B cell (primary cell): ENCODE measurements at regions of chr1 and their contacts with region 1.

Region 1: DNA sequence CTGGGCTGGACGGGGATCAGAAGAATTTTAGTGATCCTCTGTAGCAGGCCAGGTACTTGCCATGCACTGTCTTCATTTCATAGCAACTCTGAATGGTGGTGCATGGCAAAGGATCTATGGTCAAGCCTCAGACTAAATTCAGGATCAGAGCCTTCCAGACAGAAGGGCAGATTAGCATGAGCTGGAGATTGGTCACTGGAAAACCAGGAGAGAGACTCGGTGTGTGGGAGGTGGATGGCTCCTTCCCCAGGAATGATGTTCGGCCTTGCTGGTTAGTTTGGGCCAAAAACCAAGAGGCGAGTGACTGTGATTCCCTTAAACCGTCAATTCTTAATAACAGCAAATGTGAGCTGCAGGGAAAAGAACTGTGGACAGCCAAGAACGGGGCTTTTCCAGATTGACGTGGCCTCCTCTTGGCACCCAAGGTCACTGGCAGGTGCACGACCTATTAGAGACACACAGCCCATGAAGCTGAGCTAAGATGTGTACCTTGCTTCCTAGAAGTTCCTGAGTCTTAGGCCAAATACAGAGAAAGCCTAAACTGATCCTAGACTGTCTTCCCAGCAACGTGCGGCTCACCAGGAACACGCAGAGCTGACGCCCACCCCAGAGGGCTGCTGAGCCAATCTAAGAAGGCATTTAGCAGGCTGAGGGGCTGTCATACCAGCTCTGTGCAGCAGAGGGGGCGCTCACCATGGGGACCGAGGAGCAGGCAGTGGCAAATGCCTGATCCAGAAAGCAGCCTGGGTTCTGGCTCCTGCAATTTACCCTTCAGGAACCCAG is 18.5 kb downstream of the ALDH4A1 start:
- DNase-seq: peak; percentile 76
- ATAC-seq: peak; percentile 79
- H3K4me3 ChIP-seq: no peak overlapping the region
- H3K4me3 Mint-ChIP-seq: no peak overlapping the region
- H3K27ac ChIP-seq: no peak overlapping the region
- H3K27ac Mint-ChIP-seq: no peak overlapping the region
- H3K4me1 ChIP-seq: no peaks in the 10 kb centered on the region
- H3K4me1 Mint-ChIP-seq: no peaks in the 10 kb centered on the region
- H3K27me3 ChIP-seq: no peaks in the 10 kb centered on the region
- H3K27me3 Mint-ChIP-seq: no peaks in the 10 kb centered on the region
- CTCF ChIP-seq: peak; percentile 96

Region 2: DNA sequence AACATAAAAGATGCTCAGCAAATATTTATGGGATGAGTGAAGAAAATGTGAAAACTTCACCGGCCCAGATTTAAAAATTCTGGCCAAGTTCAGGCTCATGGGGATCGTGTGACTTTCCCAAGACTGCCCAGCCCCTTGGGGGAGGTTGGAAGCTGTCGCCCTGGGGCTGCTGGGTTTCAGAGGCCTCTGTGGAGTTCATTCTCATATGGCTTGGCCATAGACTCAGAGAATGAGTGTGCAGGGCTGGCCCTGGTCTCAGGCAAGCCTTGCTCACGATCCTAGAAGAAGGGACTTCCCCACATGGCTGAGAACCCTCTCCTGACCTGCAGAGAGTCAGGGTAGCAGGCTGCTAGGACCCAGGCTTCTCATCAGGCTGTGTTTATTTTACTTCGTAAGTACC is 1789.2 kb before region 1 on chr1:
- CTCF ChIA-PET with region 1: no interaction called
- POLR2A ChIA-PET with region 1: no interaction called
- intact Hi-C with region 1: no loop called
- DNase-seq: no peak
- ATAC-seq: no peak
- H3K4me3 ChIP-seq: no peak overlapping the region
- H3K4me3 Mint-ChIP-seq: no peak overlapping the region
- H3K27ac ChIP-seq: no peak overlapping the region
- H3K27ac Mint-ChIP-seq: no peak overlapping the region
- H3K4me1 ChIP-seq: no peaks in the 10 kb centered on the region
- H3K4me1 Mint-ChIP-seq: no peaks in the 10 kb centered on the region
- H3K27me3 ChIP-seq: no peaks in the 10 kb centered on the region
- H3K27me3 Mint-ChIP-seq: peaks cover 3% of the 10 kb centered on the region
- CTCF ChIP-seq: no peak

Region 3: GRCh38 chr1:18805925-18806849 is 77.6 kb before region 1 on chr1:
- CTCF ChIA-PET with region 1: no interaction called
- POLR2A ChIA-PET with region 1: no interaction called
- intact Hi-C with region 1: no loop called
- DNase-seq: no peak
- ATAC-seq: no peak
- H3K4me3 ChIP-seq: no peak overlapping the region
- H3K4me3 Mint-ChIP-seq: no peak overlapping the region
- H3K27ac ChIP-seq: no peak overlapping the region
- H3K27ac Mint-ChIP-seq: no peak overlapping the region
- H3K4me1 ChIP-seq: no peaks in the 10 kb centered on the region
- H3K4me1 Mint-ChIP-seq: no peaks in the 10 kb centered on the region
- H3K27me3 ChIP-seq: peaks cover 0 to 5% (median 0%) of the 10 kb centered on the region in 4 experiments
- H3K27me3 Mint-ChIP-seq: peaks cover 23% of the 10 kb centered on the region
- CTCF ChIP-seq: no peak

Region 4: DNA sequence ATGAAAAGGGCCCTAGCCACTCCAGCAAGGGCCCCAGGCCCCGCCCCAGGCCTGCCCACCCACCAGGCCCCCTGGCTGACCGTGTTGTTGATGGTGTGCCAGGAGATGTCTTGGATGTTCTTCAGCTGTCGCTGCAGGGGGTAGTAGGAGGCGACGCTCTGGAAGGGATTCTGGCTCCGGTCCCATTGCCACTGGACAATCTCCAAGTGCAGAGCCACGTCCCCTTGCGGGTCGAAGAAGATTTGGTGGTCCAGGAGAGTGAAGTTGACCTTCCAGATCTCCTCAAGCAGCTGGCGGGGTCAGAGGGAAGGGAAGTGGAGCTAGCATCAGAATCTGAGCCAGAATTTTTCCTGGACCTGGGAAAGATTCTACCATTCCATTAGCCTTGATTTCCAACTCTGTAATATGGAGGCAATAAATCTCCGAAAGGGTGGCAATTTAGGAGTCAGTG is 34.5 kb before region 1 on chr1:
- CTCF ChIA-PET with region 1: no interaction called
- POLR2A ChIA-PET with region 1: no interaction called
- intact Hi-C with region 1: no loop called
- DNase-seq: no peak
- ATAC-seq: no peak
- H3K4me3 ChIP-seq: no peak overlapping the region
- H3K4me3 Mint-ChIP-seq: no peak overlapping the region
- H3K27ac ChIP-seq: no peak overlapping the region
- H3K27ac Mint-ChIP-seq: no peak overlapping the region
- H3K4me1 ChIP-seq: no peaks in the 10 kb centered on the region
- H3K4me1 Mint-ChIP-seq: no peaks in the 10 kb centered on the region
- H3K27me3 ChIP-seq: peaks cover 0 to 3% (median 0%) of the 10 kb centered on the region in 4 experiments
- H3K27me3 Mint-ChIP-seq: peaks cover 5% of the 10 kb centered on the region
- CTCF ChIP-seq: no peak

Region 5: DNA sequence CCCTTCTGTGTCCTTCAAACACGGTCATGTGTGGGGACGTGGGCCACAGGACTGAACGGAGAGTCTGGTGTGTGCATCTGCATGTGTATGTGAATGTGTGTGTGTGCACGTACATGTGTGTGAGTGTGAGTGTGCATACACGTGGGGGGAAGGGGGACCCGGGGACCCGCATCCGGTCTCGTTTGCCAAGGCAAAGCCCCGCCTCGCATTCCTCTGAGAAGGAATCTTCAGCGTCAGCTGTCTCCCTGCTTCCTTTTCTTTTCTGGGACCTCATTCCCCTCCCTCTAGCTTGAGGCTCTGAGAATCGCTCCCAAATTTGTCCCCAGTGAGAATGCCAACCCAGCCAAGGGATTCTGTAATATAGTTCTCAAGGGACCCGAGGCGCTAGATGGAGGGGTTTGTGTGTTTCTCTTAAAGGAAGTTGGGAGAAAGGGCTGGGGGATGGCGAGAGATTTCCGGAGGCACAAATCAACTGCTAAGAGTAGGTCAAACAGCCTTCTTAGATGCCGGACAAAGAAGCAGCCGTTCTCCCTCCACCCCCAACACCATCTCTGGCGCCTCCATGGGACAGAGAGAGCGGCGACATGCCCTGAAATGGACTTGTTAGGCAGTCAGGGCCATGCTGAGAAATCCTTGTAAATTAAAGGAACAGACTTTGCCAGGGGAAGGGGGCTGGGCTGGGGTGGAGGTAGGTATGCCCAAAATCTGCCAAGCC is 66.0 kb after region 1 on chr1:
- CTCF ChIA-PET with region 1: interaction called, 11 read pairs
- POLR2A ChIA-PET with region 1: no interaction called
- intact Hi-C with region 1: no loop called
- DNase-seq: peak; percentile 56
- ATAC-seq: no peak
- H3K4me3 ChIP-seq: peak overlapping the region; percentile 23 to 64 (median 47)
- H3K4me3 Mint-ChIP-seq: peak overlapping the region; percentile 85
- H3K27ac ChIP-seq: peak overlapping the region; percentile 97 to 100
- H3K27ac Mint-ChIP-seq: peak overlapping the region; percentile 98
- H3K4me1 ChIP-seq: peaks cover 91 to 97% of the 10 kb centered on the region in 2 donors
- H3K4me1 Mint-ChIP-seq: peaks cover 94% of the 10 kb centered on the region
- H3K27me3 ChIP-seq: no peaks in the 10 kb centered on the region
- H3K27me3 Mint-ChIP-seq: no peaks in the 10 kb centered on the region
- CTCF ChIP-seq: no peak

Region 6: DNA sequence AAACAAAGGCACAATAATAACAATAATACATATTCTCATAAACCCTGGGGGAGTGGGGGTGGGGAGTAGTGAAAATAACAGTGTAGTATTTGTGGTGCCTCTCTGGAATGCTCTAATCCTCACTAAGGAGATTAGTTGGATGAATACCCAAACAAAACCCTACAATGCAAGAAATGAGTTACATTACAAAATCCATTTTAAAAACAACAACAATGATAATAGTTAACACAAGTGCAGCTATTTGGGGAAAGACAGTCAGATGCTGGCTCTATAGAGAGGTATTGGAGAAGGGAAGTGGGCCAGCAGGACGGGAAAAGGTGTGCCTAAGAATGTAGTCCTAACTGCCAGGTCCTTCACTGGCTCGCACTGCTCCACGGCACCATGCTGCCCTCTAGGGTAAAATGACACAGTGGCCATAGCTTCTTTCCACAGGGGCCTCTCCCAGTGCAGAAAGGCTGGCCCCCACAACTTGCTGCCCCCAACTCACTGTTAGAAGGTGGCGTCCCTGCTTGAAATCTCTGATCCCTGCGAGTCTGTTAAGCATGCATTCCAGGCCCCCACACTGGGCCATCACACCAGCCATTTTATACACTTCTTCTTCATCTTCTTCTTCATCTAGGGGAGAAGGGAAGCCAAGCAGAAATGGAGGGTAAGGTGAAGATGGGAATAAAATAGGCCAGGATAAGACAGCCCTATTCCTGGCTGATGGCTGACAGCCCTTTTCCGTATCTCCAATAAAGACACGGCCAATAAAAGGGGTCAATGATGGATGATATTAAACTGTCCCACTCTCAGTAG is 212.4 kb after region 1 on chr1:
- CTCF ChIA-PET with region 1: interaction called, 19 read pairs
- POLR2A ChIA-PET with region 1: no interaction called
- intact Hi-C with region 1: loop called (anchors 1 kb)
- DNase-seq: no peak
- ATAC-seq: no peak
- H3K4me3 ChIP-seq: no peak overlapping the region
- H3K4me3 Mint-ChIP-seq: no peak overlapping the region
- H3K27ac ChIP-seq: no peak overlapping the region
- H3K27ac Mint-ChIP-seq: no peak overlapping the region
- H3K4me1 ChIP-seq: no peaks in the 10 kb centered on the region
- H3K4me1 Mint-ChIP-seq: no peaks in the 10 kb centered on the region
- H3K27me3 ChIP-seq: no peaks in the 10 kb centered on the region
- H3K27me3 Mint-ChIP-seq: no peaks in the 10 kb centered on the region
- CTCF ChIP-seq: no peak

Region 7: DNA sequence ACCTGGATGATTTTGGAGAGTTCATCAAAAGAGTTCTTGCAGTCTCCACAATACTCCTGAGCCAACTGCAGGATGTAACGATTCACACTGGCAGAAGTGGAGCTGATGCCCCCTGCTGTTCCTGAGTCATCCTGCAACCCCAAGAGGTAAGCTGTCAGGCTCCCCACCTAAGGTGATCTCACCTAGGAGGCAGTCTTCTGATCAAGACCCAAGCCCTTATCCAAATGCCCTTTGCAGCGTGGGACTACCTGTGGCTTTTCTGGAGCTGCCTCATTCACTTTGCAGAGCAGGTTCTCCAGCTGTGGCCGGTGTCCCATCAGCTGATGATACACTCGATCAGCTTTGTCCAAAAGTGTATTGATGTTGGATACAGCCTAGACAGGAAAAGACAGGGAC is 229.9 kb after region 1 on chr1:
- CTCF ChIA-PET with region 1: interaction called, 10 read pairs
- POLR2A ChIA-PET with region 1: no interaction called
- intact Hi-C with region 1: no loop called
- DNase-seq: peak; percentile 33
- ATAC-seq: no peak
- H3K4me3 ChIP-seq: no peak overlapping the region
- H3K4me3 Mint-ChIP-seq: no peak overlapping the region
- H3K27ac ChIP-seq: no peak overlapping the region
- H3K27ac Mint-ChIP-seq: no peak overlapping the region
- H3K4me1 ChIP-seq: no peaks in the 10 kb centered on the region
- H3K4me1 Mint-ChIP-seq: no peaks in the 10 kb centered on the region
- H3K27me3 ChIP-seq: no peaks in the 10 kb centered on the region
- H3K27me3 Mint-ChIP-seq: no peaks in the 10 kb centered on the region
- CTCF ChIP-seq: peak; percentile 39